Kidney (tissue), 22 donors: ENCODE measurements at regions of chr10 and their contacts with region 1.

Region 1: DNA sequence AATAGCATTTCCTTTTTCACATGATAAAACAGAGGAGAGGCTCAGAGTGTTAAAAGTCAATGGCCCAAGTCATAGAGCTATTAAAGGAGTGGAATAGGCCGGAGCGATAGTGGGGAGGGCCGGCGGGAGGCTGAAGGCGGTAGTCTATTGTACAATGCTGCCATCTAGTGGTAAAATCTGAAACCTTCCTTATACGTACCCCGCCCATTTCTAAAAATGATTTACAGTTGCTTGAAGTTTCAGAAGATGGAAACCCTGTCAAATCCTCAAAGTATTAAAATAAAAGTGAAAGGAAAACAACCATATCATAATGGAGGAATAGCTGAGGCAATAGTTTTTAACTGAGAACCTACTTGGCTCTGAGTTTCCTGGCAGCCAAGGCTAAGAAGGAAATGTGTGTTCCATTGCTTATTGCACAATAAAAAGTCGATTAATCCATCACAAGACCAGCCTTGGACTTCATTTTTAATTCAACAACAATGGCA is 209.1 kb downstream of the CCSER2 start:
- DNase-seq: peak in 3 of 5 donors; percentile 59 to 81 (median 76)
- H3K4me3 ChIP-seq: peak overlapping the region in 1 of 3 donors; percentile 12
- H3K27ac ChIP-seq: no peak overlapping the region
- H3K4me1 ChIP-seq: no peaks in the 10 kb centered on the region
- H3K27me3 ChIP-seq: peaks cover 4% of the 10 kb centered on the region
- CTCF ChIP-seq: peak; percentile 77

Region 2: DNA sequence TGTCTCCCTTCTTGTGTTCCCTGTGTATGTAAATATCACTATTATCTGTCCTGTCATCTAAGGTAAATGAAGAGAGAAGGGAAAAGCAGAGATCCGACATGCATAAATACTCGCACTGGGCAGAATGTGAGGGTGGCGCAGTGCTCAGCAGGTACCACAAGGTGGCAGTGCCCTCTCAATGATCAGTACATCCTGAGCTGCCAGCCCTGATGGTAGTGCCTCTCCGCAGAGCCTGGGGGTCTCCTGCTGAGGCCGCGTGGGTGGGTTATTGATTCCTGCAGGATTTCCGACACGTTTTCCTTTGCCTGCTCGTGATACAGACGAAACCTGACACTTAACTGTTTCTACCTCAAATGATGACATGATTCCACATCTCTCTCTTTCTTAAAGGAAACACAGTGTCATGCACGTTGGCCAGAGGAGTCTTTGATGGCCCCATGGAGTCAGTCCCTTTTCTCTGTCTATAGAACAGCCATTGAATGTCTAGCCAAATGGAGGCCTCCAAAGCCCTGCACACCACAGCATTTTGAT is 272.8 kb before region 1 on chr10:
- intact Hi-C with region 1: loop called (anchors 5 kb)
- DNase-seq: peak in 4 of 5 donors; percentile 57 to 70 (median 60)
- H3K4me3 ChIP-seq: no peak overlapping the region
- H3K27ac ChIP-seq: no peak overlapping the region
- H3K4me1 ChIP-seq: peaks cover 0 to 3% (median 0%) of the 10 kb centered on the region in 3 donors
- H3K27me3 ChIP-seq: no peaks in the 10 kb centered on the region
- CTCF ChIP-seq: peak; percentile 88

Region 3: DNA sequence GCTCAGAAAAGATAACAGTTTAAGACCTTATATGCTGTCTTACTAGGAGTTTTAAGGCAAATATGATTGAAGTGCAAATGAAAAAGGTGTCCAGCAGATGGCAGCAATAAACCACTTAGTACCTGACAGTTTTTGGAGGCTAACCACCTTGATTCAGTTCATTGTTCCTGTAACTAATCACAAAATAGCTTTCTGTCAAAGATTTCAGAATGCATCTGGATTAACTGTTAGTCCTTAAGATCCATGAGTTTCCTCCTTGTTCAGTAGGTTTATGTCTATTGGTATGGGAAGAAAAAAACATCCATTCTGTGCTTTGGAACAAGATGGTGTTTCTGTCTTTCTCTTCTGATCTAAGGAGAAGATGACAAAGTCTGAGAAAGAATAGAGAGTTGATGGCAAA is 162.5 kb before region 1 on chr10:
- intact Hi-C with region 1: loop called (anchors 10 kb)
- DNase-seq: peak in 3 of 5 donors; percentile 19 to 78 (median 77)
- H3K4me3 ChIP-seq: no peak overlapping the region
- H3K27ac ChIP-seq: no peak overlapping the region
- H3K4me1 ChIP-seq: no peaks in the 10 kb centered on the region
- H3K27me3 ChIP-seq: no peaks in the 10 kb centered on the region
- CTCF ChIP-seq: peak; percentile 56

Region 4: GRCh38 chr10:86376852-86377796 is 1839.6 kb after region 1 on chr10:
- intact Hi-C with region 1: loop called (anchors 10 kb)
- DNase-seq: peak; percentile 76 to 90 (median 82)
- H3K4me3 ChIP-seq: no peak overlapping the region
- H3K27ac ChIP-seq: no peak overlapping the region
- H3K4me1 ChIP-seq: no peaks in the 10 kb centered on the region
- H3K27me3 ChIP-seq: peaks cover 6% of the 10 kb centered on the region
- CTCF ChIP-seq: peak; percentile 99